Panc1 (cell line): ENCODE measurements at regions of chr6 and their contacts with region 1.

Region 1: GRCh38 chr6:141354191-141354955 is 778.4 kb upstream of the GJE1 start:
- DNase-seq: no peak
- ATAC-seq: no peak
- H3K4me3 ChIP-seq: no peak overlapping the region
- H3K27ac ChIP-seq: no peak overlapping the region
- H3K4me1 ChIP-seq: no peaks in the 10 kb centered on the region
- H3K27me3 ChIP-seq: no peaks in the 10 kb centered on the region
- CTCF ChIP-seq: peak; percentile 31

Region 2: GRCh38 chr6:141203902-141204575 is 150.3 kb before region 1 on chr6:
- CTCF ChIA-PET with region 1: no interaction called
- POLR2A ChIA-PET with region 1: interaction called, 14 read pairs
- in situ Hi-C with region 1: no loop called
- intact Hi-C with region 1: no loop called
- DNase-seq: no peak
- ATAC-seq: no peak
- H3K4me3 ChIP-seq: no peak overlapping the region
- H3K27ac ChIP-seq: no peak overlapping the region
- H3K4me1 ChIP-seq: no peaks in the 10 kb centered on the region
- H3K27me3 ChIP-seq: no peaks in the 10 kb centered on the region
- CTCF ChIP-seq: no peak